SK-N-SH (cell line): ENCODE measurements at regions of chr4 and their contacts with region 1.

Region 1: GRCh38 chr4:43132010-43132582 is 239.6 kb downstream of the GRXCR1 start:
- DNase-seq: peak; percentile 34
- H3K4me3 ChIP-seq: peak overlapping the region; percentile 24 to 53; a peak in 2 of 4 replicates
- H3K27ac ChIP-seq: no peak overlapping the region
- H3K4me1 ChIP-seq: no peaks in the 10 kb centered on the region
- H3K27me3 ChIP-seq: no peaks in the 10 kb centered on the region
- CTCF ChIP-seq: peak; percentile 98
- EP300 ChIP-seq: no peak
- RAD21 ChIP-seq: peak; percentile 82

Region 2: GRCh38 chr4:43148481-43148880 is 16.4 kb after region 1 on chr4:
- CTCF ChIA-PET with region 1: interaction called, 16 read pairs
- POLR2A ChIA-PET with region 1: no interaction called
- DNase-seq: no peak
- H3K4me3 ChIP-seq: no peak overlapping the region
- H3K27ac ChIP-seq: no peak overlapping the region
- H3K4me1 ChIP-seq: no peaks in the 10 kb centered on the region
- H3K27me3 ChIP-seq: no peaks in the 10 kb centered on the region
- CTCF ChIP-seq: no peak
- EP300 ChIP-seq: no peak
- RAD21 ChIP-seq: no peak

Region 3: DNA sequence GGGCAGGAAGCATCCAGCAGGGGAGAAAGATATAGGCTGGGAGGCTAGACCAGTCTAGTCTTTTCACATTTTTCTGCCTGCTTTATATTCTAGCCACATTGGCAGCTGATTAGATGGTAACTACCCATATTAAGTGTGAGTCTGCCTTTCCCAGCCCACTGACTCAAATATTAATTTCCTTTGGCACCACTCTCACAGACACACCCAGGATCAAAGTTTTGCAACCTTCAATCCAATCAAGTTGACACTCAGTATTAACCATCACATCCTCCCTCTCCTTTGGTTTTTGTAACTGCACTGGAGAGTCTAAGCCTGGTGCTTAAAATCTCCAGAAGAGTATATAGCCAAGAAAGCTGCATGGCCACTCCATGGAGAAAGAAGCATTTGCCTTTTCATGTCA is 320.9 kb after region 1 on chr4:
- CTCF ChIA-PET with region 1: no interaction called
- POLR2A ChIA-PET with region 1: no interaction called
- DNase-seq: no peak
- H3K4me3 ChIP-seq: no peak overlapping the region
- H3K27ac ChIP-seq: no peak overlapping the region
- H3K4me1 ChIP-seq: no peaks in the 10 kb centered on the region; a peak in 2 of 4 replicates
- H3K27me3 ChIP-seq: no peaks in the 10 kb centered on the region
- CTCF ChIP-seq: no peak
- EP300 ChIP-seq: no peak
- RAD21 ChIP-seq: no peak